Esophagus muscularis mucosa (tissue), 4 donors: ENCODE measurements at regions of chr16 and their contacts with region 1.

Region 1: GRCh38 chr16:81723098-81723723 is 55.9 kb upstream of the PLCG2 start:
- DNase-seq: no peak
- H3K4me3 ChIP-seq: no peak overlapping the region
- H3K27ac ChIP-seq: no peak overlapping the region
- H3K4me1 ChIP-seq: peaks cover 0 to 23% (median 15%) of the 10 kb centered on the region in 4 donors
- H3K27me3 ChIP-seq: no peaks in the 10 kb centered on the region
- CTCF ChIP-seq: peak; percentile 67 to 79 (median 72)
- EP300 ChIP-seq: no peak
- POLR2A ChIP-seq: no peak

Region 2: GRCh38 chr16:81366316-81366932 is 356.8 kb before region 1 on chr16:
- intact Hi-C with region 1: loop called (anchors 2 kb)
- DNase-seq: no peak
- H3K4me3 ChIP-seq: no peak overlapping the region
- H3K27ac ChIP-seq: no peak overlapping the region
- H3K4me1 ChIP-seq: peaks cover 0 to 3% (median 0%) of the 10 kb centered on the region in 4 donors
- H3K27me3 ChIP-seq: no peaks in the 10 kb centered on the region
- CTCF ChIP-seq: peak; percentile 66 to 72 (median 70)
- EP300 ChIP-seq: no peak
- POLR2A ChIP-seq: no peak

Region 3: GRCh38 chr16:81623363-81624102 is 99.7 kb before region 1 on chr16:
- intact Hi-C with region 1: loop called (anchors 5 kb)
- DNase-seq: no peak
- H3K4me3 ChIP-seq: no peak overlapping the region
- H3K27ac ChIP-seq: no peak overlapping the region
- H3K4me1 ChIP-seq: peaks cover 10 to 26% (median 22%) of the 10 kb centered on the region in 4 donors
- H3K27me3 ChIP-seq: no peaks in the 10 kb centered on the region
- CTCF ChIP-seq: peak; percentile 49 to 63 (median 62)
- EP300 ChIP-seq: no peak
- POLR2A ChIP-seq: no peak

Region 4: GRCh38 chr16:81798311-81799137 is 75.3 kb after region 1 on chr16:
- intact Hi-C with region 1: no loop called
- DNase-seq: no peak
- H3K4me3 ChIP-seq: no peak overlapping the region
- H3K27ac ChIP-seq: no peak overlapping the region
- H3K4me1 ChIP-seq: peaks cover 0 to 9% (median 6%) of the 10 kb centered on the region in 4 donors
- H3K27me3 ChIP-seq: no peaks in the 10 kb centered on the region
- CTCF ChIP-seq: no peak
- EP300 ChIP-seq: no peak
- POLR2A ChIP-seq: no peak

Region 5: DNA sequence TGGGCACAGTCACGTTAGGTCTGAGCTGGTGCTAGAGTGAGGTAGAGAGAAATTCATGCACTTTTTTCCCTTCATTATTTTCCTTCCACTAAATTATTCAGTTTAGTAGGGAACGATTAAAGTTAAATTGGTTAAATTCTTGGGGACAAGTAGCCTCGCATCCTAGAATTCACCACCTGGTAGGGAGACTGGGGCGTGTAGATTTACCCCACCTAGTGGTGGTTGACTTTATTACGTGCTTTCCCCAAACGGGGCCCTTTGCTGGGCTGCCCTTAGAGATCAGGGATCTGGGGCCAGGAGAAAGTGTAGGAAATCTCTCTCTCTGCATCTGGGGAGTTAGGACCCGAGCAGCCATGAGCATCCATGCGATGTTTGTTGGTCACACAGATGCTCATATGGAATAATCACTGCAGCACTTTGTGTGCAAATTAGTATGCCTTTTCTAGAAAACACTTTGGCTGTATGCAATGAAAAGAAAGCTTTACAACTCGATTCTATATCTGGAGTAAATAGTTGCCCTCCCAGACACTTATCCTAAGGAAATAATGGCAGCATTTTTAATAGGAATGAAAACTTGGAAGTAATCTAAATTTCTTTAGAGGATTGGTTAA is 162.9 kb after region 1 on chr16:
- intact Hi-C with region 1: no loop called
- DNase-seq: no peak
- H3K4me3 ChIP-seq: no peak overlapping the region
- H3K27ac ChIP-seq: no peak overlapping the region
- H3K4me1 ChIP-seq: peaks cover 0 to 6% (median 0%) of the 10 kb centered on the region in 4 donors
- H3K27me3 ChIP-seq: peaks cover 0 to 19% (median 0%) of the 10 kb centered on the region in 4 donors
- CTCF ChIP-seq: peak; percentile 28 to 56 (median 28)
- EP300 ChIP-seq: no peak
- POLR2A ChIP-seq: no peak